ENCODE measurements at regions of chr5 and their contacts with region 1.

Region 1: DNA sequence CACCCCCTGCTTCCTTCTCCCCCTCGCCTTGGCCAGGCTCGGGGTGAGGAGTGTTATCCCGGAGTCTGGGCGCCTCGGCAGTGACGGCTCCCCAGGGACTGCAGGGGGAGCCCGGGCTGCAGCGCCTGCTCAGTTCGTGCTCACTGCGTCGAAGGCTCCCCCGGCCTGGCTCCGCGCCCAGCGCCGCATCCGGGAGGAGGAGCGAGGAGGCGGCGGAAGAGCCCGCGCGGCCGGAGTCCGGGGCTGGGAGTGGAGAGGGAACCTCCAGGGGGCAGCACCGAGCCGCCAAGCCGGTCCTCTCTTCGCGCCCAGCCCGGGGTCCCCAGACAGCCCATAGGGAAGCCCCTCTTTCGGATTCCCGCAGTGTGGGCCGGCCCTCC is 1.3 kb upstream of the EGR1 start:
- DNase-seq: peak; percentile 86 to 98 (median 94)
- ATAC-seq: peak; percentile 51 to 57
- H3K4me3 Mint-ChIP-seq: peak overlapping the region; percentile 84 to 95 (median 90)
- H3K27ac Mint-ChIP-seq: peak overlapping the region in 9 of 10 donors; percentile 76 to 97 (median 95)
- H3K4me1 Mint-ChIP-seq: peaks cover 33 to 54% (median 49%) of the 10 kb centered on the region in 4 donors
- H3K27me3 Mint-ChIP-seq: no peaks in the 10 kb centered on the region

Region 2: DNA sequence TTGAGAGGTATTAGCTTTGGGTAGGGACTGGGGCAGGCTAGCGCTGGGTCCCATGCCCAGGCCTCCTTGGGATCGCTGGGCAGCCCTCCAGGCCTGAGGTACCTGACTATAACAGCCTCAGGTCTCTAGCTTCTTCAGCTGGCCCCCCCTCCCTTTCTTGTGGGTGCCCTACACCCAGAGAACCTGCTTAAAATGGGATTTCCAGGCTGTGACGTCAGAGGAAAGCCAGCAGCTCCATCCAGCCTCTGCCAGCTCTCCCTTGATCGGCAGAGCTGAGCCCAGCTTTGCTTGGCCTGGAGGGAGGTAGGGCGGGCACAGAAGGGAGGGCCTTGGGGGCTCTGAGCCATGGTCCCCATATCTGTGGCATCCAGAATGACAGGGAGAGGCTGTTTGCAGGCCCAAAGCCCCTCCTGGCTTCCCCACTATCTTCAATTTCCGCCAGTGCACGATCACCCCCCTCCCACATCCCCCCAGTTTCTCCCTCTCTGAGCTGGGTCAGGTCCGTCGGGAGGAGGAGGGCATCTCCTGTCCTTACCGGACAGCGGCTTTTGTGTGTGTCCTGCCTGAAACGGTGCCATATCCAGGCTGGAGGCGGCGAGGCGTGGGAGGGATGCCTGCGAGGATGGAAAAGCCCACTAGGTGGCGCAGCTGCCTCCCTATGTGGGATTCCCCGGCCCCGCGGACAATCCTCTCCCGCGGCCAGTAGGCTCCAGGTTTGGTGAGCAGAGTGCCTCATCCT is 14.3 kb before region 1 on chr5:
- POLR2A ChIA-PET with region 1: interaction called, 21 read pairs
- DNase-seq: peak; percentile 48 to 82 (median 68)
- ATAC-seq: peak; percentile 88 to 97
- H3K4me3 Mint-ChIP-seq: peak overlapping the region in 4 of 10 donors; percentile 34 to 39 (median 36)
- H3K27ac Mint-ChIP-seq: peak overlapping the region in 2 of 10 donors; percentile 72 to 74
- H3K4me1 Mint-ChIP-seq: peaks cover 3 to 7% (median 6%) of the 10 kb centered on the region in 4 donors
- H3K27me3 Mint-ChIP-seq: no peaks in the 10 kb centered on the region

Region 3: DNA sequence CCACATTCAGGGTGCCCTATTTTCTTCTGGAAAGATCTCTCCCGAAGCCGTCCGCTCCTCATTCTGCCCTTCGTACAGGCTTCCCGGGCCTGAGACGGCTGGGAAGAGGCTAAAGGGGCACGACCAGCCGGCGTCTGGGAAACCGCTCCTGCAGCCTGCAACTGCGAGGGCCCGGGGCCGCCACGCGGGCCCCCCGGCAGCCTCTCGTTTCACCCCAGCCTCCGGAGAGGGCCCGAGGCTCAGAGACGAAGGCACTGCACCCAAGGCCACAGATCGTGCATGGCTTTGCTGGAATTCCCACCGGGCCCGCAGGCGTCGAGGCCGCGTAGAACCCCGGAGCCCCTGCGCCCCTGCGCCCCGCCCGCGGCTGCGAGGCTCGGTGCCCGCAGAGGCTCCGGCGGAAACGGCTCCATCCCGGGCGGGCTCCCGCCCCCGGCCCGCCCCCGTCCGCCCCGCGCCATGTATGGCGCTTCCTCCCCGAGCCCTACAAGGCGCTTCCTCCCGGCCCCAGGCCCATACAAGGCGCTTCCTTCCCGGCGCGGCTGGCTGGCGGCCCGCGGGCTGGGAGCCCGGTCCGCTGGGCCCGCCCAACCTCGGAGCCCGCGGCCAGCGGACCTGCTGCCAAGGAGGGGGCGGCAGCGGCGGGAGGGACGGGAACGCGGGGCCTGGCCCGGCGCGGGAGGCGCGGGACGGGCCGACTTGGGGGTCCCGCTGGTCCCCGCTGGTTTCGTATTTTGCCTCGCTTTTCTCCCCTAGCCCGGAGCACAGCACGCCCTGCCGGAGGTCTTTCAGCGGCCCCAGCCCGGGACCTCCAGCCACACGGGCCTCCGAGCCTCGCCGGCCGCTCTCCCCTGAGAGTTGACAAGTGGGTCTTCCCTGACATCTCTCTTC is 27.9 kb after region 1 on chr5:
- POLR2A ChIA-PET with region 1: interaction called, 21 read pairs
- DNase-seq: peak; percentile 72 to 92 (median 82)
- ATAC-seq: peak; percentile 97 to 98
- H3K4me3 Mint-ChIP-seq: peak overlapping the region; percentile 84 to 98 (median 93)
- H3K27ac Mint-ChIP-seq: peak overlapping the region in 7 of 10 donors; percentile 61 to 95 (median 84)
- H3K4me1 Mint-ChIP-seq: peaks cover 5 to 16% (median 14%) of the 10 kb centered on the region in 4 donors
- H3K27me3 Mint-ChIP-seq: peaks cover 3 to 17% (median 15%) of the 10 kb centered on the region in 5 donors

Region 4: GRCh38 chr5:138503487-138504270 is 39.7 kb after region 1 on chr5:
- POLR2A ChIA-PET with region 1: interaction called, 12 read pairs
- DNase-seq: peak in 8 of 10 donors; percentile 6 to 63 (median 42)
- ATAC-seq: peak; percentile 72 to 76
- H3K4me3 Mint-ChIP-seq: no peak overlapping the region
- H3K27ac Mint-ChIP-seq: peak overlapping the region in 2 of 10 donors; percentile 42 to 44
- H3K4me1 Mint-ChIP-seq: peaks cover 0 to 2% (median under 1%) of the 10 kb centered on the region in 4 donors
- H3K27me3 Mint-ChIP-seq: no peaks in the 10 kb centered on the region

Region 5: DNA sequence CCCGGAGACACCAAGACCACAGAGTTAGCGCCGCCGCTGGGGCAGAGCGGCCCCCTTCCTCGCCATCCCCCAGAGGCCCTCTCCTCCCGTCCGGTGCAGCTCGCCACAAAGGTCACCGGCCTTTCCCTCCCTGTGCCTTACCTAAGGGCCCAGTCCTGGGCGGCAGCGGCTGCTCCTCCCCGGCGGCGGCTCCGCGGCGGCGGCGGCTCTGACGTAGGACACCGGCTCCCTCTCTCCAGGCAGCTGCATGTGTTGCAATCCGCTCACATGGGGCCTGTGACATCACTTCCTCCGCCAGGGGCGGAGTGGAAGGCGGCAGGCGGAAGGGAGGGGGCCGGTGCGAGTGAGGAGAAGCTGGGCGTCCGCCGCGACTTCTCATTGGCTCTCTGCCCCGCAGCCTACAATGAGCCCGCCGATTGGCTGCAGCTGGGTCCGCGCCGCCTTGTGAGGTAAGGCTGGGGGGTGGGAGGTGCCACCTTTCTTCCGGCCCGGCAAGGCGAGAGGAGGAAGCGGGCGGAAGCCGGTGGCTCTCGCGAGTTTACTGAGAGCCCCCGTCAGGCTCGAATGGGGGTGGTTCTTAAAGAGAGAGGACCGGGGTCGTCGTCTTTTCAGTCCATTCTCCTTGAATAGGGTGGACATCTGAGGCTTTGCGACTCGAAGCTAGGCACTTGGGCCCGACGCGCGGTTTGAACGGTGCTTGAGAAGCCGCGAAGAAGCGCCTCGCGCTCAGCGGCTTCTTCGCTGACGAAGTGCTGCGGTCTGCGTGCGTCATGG is 79.1 kb after region 1 on chr5 and contains the start of gene ETF1:
- POLR2A ChIA-PET with region 1: interaction called, 15 read pairs
- DNase-seq: peak; percentile 97 to 100 (median 100)
- ATAC-seq: peak; percentile 86 to 87
- H3K4me3 Mint-ChIP-seq: peak within 1 kb of the TSS; percentile 94 to 100 (median 100)
- H3K27ac Mint-ChIP-seq: peak within 1 kb of the TSS; percentile 99 to 100 (median 100)
- H3K4me1 Mint-ChIP-seq: peaks cover 35 to 79% (median 74%) of the 10 kb centered on the region in 4 donors
- H3K27me3 Mint-ChIP-seq: no peaks in the 10 kb centered on the region
- polyA plus RNA-seq, gene ETF1: 21.5 to 27.5 (median 24.1) TPM

Region 6: DNA sequence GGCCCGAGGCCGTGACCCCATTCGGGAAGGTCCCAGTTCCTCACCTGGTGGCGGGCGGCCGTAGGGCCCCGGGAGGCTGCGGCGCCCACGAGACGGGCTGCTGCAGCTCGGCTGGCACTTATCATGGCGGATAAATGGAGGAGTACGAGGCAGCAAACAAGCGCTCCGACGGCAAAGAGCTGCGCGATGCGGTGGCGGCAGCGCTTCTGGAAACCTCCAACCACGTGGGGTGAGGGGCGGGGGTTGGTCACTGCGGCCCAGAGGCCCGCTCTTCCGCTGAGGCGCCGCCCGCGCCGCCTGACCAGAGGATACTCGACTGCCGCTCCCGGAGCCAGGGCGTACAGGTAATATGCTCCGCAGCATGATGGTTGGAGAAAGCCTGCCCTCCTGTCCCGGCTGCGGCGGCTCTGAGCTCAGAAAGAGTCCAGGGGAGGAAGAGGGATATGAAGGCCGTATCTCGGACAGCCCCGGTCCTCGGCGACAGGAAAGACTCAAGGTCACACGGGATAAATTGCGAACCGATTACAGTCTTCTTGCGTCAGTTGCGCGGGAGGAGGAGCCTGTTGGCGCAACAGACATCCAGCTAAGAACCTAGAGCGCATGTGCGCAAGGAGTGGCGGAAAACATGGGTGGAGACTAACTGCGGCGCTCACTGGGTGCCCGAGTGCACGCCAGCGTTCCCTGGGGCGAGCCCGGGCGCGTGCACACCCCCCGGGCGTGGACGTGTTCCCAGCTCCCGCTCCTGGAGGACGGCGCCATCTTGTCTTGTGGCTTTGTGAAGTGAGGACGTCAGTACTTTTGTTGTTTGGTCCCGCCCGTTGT is 111.4 kb after region 1 on chr5 and contains the start of gene HSPA9:
- POLR2A ChIA-PET with region 1: interaction called, 14 read pairs
- DNase-seq: peak; percentile 87 to 99 (median 97)
- ATAC-seq: peak; percentile 85 to 86
- H3K4me3 Mint-ChIP-seq: peak within 1 kb of the TSS; percentile 93 to 99 (median 98)
- H3K27ac Mint-ChIP-seq: peak within 1 kb of the TSS; percentile 99 to 100 (median 100)
- H3K4me1 Mint-ChIP-seq: peaks cover 16 to 45% (median 33%) of the 10 kb centered on the region in 4 donors
- H3K27me3 Mint-ChIP-seq: no peaks in the 10 kb centered on the region
- polyA plus RNA-seq, gene HSPA9: 130 to 164 (median 140) TPM